ENCODE measurements at regions of chr6 and their contacts with region 1.

Region 1: DNA sequence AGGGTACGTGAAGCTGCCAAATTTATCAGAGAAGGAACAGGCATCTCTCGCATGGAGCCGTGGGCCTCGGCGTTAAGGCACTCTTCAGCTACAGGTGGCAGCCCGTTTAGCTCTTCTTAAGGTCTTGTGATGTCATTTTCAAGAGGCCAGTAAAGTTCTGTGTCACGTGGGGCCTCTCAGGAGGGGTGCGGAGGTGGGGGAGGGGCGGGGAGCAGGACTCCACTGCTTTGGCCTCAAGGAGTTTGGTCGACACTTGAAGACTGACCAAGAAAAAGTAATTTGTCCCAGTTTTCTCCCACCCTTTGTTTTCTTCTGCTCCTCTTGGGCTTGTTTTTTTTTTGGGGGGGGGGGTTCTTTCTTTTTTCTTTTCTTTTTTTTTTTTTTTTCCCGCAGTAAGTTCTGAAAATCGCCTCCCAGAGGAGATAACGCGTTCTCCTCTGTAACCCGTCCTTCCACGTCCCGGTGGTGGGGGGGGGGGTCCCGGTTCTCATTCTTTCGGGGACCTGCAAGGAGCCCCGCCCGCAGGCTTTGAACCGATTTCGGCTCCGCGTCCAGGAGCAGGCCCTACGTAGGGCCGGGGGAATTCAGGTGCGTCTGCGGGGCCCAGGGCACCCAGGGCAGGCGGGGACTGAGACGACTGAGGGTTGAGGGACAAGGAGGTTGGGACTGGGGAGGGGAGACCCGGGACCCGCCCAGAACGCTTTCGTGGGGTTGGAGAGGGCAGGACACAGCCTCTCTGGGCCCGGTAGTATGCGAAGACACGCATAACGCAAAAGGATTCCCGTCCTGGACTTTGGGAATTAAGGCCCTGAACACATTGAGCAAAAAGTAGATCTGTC is 26.0 kb downstream of the GPX6 start:
- DNase-seq: peak; percentile 90 to 98 (median 93)
- ATAC-seq: peak; percentile 91
- H3K4me3 ChIP-seq: peak overlapping the region; percentile 57
- H3K27ac ChIP-seq: peak overlapping the region; percentile 88
- H3K4me1 ChIP-seq: peaks cover 9 to 26% of the 10 kb centered on the region in 2 experiments
- H3K27me3 ChIP-seq: no peaks in the 10 kb centered on the region
- CTCF ChIP-seq: no peak
- EP300 ChIP-seq: peak; percentile 62
- POLR2A ChIP-seq: peak; percentile 77
- RAD21 ChIP-seq: no peak

Region 2: DNA sequence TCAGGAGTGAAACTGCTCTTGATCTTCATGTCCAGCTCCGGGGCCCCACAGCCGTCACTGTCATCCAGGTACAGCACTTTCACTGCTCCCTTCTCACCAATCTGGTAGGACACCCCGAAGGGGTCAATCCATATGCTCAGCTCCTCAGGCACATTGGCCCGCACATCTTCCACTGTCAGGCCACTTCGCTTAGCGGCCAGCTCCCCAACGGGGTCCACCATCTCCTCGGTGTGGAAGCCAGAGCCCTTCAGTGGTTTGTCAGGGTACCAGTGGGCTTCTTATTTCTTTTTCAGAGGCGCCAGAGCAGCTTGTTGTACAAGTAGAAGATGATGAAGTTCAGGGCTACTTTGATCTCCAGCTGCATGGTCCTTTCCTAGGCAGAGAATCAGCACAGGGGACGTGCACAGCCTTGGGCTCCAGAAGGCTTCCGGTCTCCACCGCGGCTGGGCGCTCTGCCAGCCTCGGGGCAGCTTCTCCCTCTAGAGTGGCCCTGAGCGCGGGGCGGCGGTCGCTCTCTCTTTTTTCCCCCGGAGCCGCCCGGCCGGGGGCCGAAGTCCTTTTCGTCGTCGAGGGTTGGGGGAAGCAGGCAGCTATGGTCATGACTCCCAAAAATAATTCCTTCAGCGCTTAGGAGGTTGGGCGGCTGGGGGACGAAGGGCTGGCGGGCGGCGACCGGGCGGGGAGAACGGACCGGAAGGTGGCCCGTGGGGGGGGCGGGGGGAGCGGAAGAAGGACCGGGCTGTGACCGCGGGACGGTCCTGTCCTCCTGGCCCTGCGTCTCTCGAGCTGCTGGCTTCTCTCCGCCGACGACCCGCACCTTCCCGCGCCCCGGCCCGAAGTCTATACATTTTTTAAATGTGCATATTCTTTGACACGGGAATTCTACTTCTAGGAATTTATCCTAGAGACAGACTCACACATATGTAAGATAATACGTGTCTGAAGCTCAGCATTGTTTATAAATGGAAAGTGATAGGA is 271.0 kb before region 1 on chr6:
- CTCF ChIA-PET with region 1: no interaction called
- POLR2A ChIA-PET with region 1: no interaction called
- in situ Hi-C with region 1: no loop called
- intact Hi-C with region 1: loop called (anchors 5 kb)
- DNase-seq: peak; percentile 89 to 95 (median 92)
- ATAC-seq: peak; percentile 84
- H3K4me3 ChIP-seq: peak overlapping the region; percentile 62
- H3K27ac ChIP-seq: peak overlapping the region; percentile 81
- H3K4me1 ChIP-seq: peaks cover 33 to 44% of the 10 kb centered on the region in 2 experiments
- H3K27me3 ChIP-seq: no peaks in the 10 kb centered on the region
- CTCF ChIP-seq: peak in 2 of 3 experiments; percentile 13 to 32; a peak in 1 of 6 replicates
- EP300 ChIP-seq: peak; percentile 36; the same call in 1 of the 2 replicates
- POLR2A ChIP-seq: peak; percentile 82
- RAD21 ChIP-seq: no peak; a peak in 1 of 4 replicates

Region 3: DNA sequence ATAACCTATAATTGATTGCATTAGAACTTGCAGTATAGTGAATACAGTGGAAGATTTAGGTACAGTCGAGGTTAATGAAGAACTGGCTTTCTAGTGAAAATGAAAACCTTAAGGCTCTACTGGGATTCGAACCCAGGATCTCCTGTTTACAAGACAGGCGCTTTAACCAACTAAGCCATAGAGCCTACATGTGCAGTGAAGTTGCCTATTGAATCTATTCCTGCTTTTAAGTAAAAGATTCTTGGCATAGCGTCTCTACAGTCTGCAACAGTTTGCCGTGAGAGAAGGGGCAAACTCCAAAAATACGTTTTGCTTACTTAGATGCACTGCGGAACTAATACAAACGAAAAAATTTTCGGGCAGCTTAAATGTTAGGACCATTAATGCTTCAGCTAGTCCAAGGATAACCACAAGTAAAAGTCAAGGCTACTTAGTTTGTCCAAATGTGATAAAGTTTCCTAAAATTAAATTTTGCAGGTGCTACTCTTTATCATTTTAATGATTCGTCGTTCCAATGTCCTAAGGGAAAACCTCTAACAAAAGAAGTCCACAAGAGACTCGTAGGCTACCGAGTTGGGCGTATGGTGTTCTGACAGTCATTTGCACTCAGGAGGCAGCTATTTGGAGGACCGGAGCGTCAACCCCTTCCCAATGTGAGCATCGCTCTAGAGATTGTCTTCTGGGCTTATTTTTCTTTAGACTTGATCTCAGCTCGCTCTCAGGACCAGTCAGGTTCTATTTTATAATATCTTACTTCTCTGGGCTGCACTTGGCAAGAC is 15.0 kb before region 1 on chr6:
- CTCF ChIA-PET with region 1: no interaction called
- POLR2A ChIA-PET with region 1: interaction called, 44 read pairs
- in situ Hi-C with region 1: no loop called
- intact Hi-C with region 1: no loop called
- DNase-seq: peak; percentile 64 to 93 (median 76)
- ATAC-seq: peak; percentile 96
- H3K4me3 ChIP-seq: peak overlapping the region; percentile 55
- H3K27ac ChIP-seq: peak overlapping the region; percentile 2; the same call in 1 of the 3 replicates
- H3K4me1 ChIP-seq: no peaks in the 10 kb centered on the region; a peak in 2 of 5 replicates
- H3K27me3 ChIP-seq: no peaks in the 10 kb centered on the region
- CTCF ChIP-seq: peak in 1 of 3 experiments; percentile 13; a peak in 1 of 6 replicates
- EP300 ChIP-seq: peak; percentile 87
- POLR2A ChIP-seq: peak; percentile 59
- RAD21 ChIP-seq: no peak; a peak in 2 of 4 replicates

Region 4: DNA sequence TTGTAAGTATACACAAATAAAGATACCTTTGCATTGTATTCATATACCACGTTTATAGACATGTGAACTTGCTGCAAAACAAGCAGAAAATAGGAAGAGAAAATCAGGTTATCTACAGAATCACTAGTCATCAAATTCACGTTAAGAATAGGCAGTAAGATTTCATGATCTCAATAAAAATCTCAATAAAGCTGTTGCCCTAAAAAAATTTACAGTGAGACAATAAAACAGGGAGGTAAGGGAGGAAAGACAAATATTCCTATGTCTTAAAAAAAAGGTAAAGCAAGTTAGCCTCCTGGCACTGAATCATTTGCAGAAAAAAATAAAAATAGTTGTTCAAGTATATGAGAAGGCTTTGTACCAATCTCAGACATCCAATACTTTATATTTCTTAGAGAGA is 80.2 kb after region 1 on chr6:
- CTCF ChIA-PET with region 1: no interaction called
- POLR2A ChIA-PET with region 1: no interaction called
- in situ Hi-C with region 1: no loop called
- intact Hi-C with region 1: no loop called
- DNase-seq: no peak
- ATAC-seq: no peak
- H3K4me3 ChIP-seq: no peak overlapping the region
- H3K27ac ChIP-seq: no peak overlapping the region
- H3K4me1 ChIP-seq: peaks cover 4 to 28% of the 10 kb centered on the region in 2 experiments; a peak in 3 of 5 replicates
- H3K27me3 ChIP-seq: no peaks in the 10 kb centered on the region
- CTCF ChIP-seq: no peak
- EP300 ChIP-seq: no peak
- POLR2A ChIP-seq: no peak
- RAD21 ChIP-seq: no peak

Region 5: DNA sequence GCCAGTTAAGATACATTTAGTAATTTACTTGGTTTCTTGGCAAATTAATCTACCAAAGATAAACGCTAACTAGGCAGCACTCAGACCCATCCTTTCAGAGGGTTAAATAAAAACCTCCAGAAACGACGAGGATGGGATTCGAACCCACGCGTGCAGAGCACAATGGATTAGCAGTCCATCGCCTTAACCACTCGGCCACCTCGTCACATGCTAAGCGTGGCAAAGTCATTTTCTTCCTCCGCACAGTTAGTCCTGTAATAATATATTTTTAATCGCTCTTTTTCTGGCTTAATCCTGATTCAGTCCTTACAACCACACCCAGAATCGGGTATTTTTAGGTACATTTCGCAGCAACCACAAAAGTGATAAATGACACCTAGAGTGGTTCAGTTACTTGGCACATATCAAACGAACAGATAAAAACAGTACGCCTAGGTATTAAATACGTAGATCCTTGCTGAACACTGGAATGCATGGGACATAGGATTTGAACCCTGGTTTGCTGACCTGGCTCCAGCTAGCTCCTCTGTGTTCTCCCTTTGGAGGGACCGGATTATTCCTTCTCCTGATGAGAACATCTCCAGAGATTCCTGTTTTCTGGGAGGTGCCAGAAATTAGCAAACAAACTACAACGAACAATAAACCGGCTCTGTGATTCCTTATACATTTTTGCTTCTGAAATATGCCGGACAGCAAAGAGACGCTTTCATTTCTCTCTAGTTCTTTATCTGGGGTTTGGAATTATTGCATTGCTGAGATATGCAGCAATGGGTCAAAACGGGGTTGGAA is 107.8 kb after region 1 on chr6:
- CTCF ChIA-PET with region 1: no interaction called
- POLR2A ChIA-PET with region 1: no interaction called
- in situ Hi-C with region 1: no loop called
- intact Hi-C with region 1: no loop called
- DNase-seq: no peak
- ATAC-seq: no peak
- H3K4me3 ChIP-seq: no peak overlapping the region
- H3K27ac ChIP-seq: no peak overlapping the region
- H3K4me1 ChIP-seq: no peaks in the 10 kb centered on the region; a peak in 1 of 5 replicates
- H3K27me3 ChIP-seq: no peaks in the 10 kb centered on the region
- CTCF ChIP-seq: no peak
- EP300 ChIP-seq: no peak
- POLR2A ChIP-seq: no peak
- RAD21 ChIP-seq: no peak

Region 6: DNA sequence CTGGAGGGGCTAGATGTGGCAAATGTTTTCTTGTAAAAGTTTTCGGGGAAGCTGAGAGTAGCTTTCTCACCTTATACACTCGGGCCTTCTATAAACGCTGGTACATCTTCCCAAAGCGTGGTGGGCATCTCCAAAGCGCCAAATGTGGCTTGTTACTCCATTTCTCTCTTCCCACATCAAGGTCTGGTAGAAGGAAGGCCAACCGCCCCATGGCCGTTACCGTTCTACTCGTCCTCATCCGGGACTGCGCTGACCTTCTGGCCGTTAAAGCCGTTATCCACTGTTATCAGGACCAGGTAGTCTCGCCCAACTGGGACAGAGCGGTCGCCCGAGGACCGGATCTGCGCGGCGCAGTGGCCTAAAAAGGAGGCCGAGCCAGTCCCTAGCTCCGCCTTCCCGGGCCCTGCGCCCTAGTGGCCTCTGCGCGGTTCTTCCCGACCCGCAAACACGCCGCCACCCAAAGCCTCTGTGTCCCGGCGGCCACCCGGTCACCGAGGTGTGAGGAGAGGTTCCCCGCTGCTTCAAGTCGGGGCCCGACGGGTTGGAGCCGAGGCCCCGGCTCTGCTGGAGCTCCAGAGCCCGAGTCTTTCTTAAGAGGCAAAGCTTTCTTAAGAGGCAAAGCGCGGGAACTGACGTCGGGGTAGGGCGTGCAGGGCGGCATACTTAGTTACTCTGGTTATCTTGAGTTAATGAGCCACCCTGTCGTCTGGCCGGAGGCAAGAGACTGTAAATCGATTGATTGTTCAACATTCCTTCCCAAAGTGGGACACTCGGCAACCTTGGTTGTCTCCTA is 126.6 kb after region 1 on chr6:
- CTCF ChIA-PET with region 1: no interaction called
- POLR2A ChIA-PET with region 1: interaction called, 10 read pairs
- in situ Hi-C with region 1: no loop called
- intact Hi-C with region 1: no loop called
- DNase-seq: peak; percentile 92 to 98 (median 94)
- ATAC-seq: peak; percentile 91
- H3K4me3 ChIP-seq: peak overlapping the region; percentile 44
- H3K27ac ChIP-seq: peak overlapping the region; percentile 86
- H3K4me1 ChIP-seq: peaks cover 13 to 22% of the 10 kb centered on the region in 2 experiments; a peak in 4 of 5 replicates
- H3K27me3 ChIP-seq: no peaks in the 10 kb centered on the region
- CTCF ChIP-seq: peak; percentile 28 to 33 (median 29); a peak in 3 of 6 replicates
- EP300 ChIP-seq: peak; percentile 98
- POLR2A ChIP-seq: peak; percentile 97
- RAD21 ChIP-seq: no peak; a peak in 1 of 4 replicates